Activated B cell treated with CpG ODN at 0.5 μM for 24 hours (primary cell): ENCODE measurements at regions of chr13 and their contacts with region 1.

Region 1: GRCh38 chr13:74026753-74027152 is 107.5 kb downstream of the KLF12 start:
- DNase-seq: peak; percentile 26
- ATAC-seq: peak; percentile 97
- H3K4me3 Mint-ChIP-seq: peak overlapping the region; percentile 81
- H3K27ac Mint-ChIP-seq: peak overlapping the region; percentile 97
- H3K4me1 Mint-ChIP-seq: peaks cover 70% of the 10 kb centered on the region
- H3K27me3 Mint-ChIP-seq: no peaks in the 10 kb centered on the region
- CTCF ChIP-seq: no peak

Region 2: DNA sequence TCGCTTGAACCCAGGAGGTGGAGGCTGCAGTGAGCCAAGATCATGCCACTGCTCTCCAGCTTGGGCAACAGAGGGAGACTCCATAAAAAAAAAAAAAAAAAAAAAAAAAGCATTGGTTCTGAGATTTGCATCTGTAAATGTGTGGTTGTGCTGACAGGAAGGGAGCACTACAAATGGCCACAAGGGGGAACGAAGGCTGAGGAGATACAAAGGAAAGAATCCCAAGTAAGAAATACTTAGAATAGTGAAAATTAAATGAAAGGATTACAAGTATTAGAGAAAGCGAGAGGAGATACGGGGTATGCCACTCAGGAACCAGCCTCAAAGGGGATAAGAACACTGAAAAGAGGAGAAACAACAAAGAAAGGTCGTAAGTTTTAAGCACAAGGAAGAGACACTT is 177.5 kb before region 1 on chr13:
- CTCF ChIA-PET with region 1: no interaction called
- POLR2A ChIA-PET with region 1: no interaction called
- intact Hi-C with region 1: loop called (anchors 5 kb)
- DNase-seq: no peak
- ATAC-seq: peak; percentile 45
- H3K4me3 Mint-ChIP-seq: no peak overlapping the region
- H3K27ac Mint-ChIP-seq: no peak overlapping the region
- H3K4me1 Mint-ChIP-seq: peaks cover 30% of the 10 kb centered on the region
- H3K27me3 Mint-ChIP-seq: no peaks in the 10 kb centered on the region
- CTCF ChIP-seq: no peak

Region 3: GRCh38 chr13:73924607-73925006 is 102.1 kb before region 1 on chr13:
- CTCF ChIA-PET with region 1: no interaction called
- POLR2A ChIA-PET with region 1: no interaction called
- intact Hi-C with region 1: no loop called
- DNase-seq: no peak
- ATAC-seq: no peak
- H3K4me3 Mint-ChIP-seq: no peak overlapping the region
- H3K27ac Mint-ChIP-seq: no peak overlapping the region
- H3K4me1 Mint-ChIP-seq: peaks cover 21% of the 10 kb centered on the region
- H3K27me3 Mint-ChIP-seq: no peaks in the 10 kb centered on the region
- CTCF ChIP-seq: no peak

Region 4: GRCh38 chr13:73967397-73968165 is 59.2 kb before region 1 on chr13:
- CTCF ChIA-PET with region 1: no interaction called
- POLR2A ChIA-PET with region 1: interaction called, 9 read pairs
- intact Hi-C with region 1: loop called (anchors 5 kb)
- DNase-seq: no peak
- ATAC-seq: peak; percentile 93
- H3K4me3 Mint-ChIP-seq: peak overlapping the region; percentile 57
- H3K27ac Mint-ChIP-seq: peak overlapping the region; percentile 82
- H3K4me1 Mint-ChIP-seq: peaks cover 61% of the 10 kb centered on the region
- H3K27me3 Mint-ChIP-seq: no peaks in the 10 kb centered on the region
- CTCF ChIP-seq: no peak

Region 5: GRCh38 chr13:73991884-73992283 is 34.9 kb before region 1 on chr13:
- CTCF ChIA-PET with region 1: no interaction called
- POLR2A ChIA-PET with region 1: interaction called, 4 read pairs
- intact Hi-C with region 1: loop called (anchors 5 kb)
- DNase-seq: no peak
- ATAC-seq: no peak
- H3K4me3 Mint-ChIP-seq: no peak overlapping the region
- H3K27ac Mint-ChIP-seq: peak overlapping the region; percentile 26
- H3K4me1 Mint-ChIP-seq: peaks cover 63% of the 10 kb centered on the region
- H3K27me3 Mint-ChIP-seq: no peaks in the 10 kb centered on the region
- CTCF ChIP-seq: no peak

Region 6: DNA sequence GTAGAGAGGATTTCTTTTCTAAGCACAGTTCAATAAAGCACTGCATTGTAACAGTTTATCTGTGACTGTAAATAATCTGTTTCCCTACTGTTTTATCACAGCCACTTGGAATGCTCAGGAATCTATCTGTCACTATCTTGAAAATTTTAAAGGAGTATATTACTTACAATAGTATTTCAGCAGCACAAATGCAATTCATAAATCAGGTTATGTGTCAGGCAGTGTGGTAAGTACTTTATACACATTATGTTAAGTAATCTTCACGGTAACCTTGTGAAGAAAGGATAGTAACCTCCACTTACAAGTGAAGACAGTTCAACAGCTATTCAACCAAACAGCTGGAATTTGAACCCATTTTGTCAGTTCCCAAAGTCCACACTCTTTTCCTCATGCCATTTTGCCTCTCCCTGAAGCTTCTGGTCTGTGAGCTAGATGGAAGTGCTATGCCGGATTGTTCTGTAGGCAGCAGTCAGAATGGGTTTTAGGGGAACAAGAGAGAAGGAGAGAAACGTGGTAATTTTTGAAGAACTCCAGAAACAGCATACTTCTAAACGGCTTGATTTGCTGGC is 17.6 kb before region 1 on chr13:
- CTCF ChIA-PET with region 1: no interaction called
- POLR2A ChIA-PET with region 1: no interaction called
- intact Hi-C with region 1: loop called (anchors 2 kb)
- DNase-seq: no peak
- ATAC-seq: no peak
- H3K4me3 Mint-ChIP-seq: no peak overlapping the region
- H3K27ac Mint-ChIP-seq: no peak overlapping the region
- H3K4me1 Mint-ChIP-seq: peaks cover 33% of the 10 kb centered on the region
- H3K27me3 Mint-ChIP-seq: no peaks in the 10 kb centered on the region
- CTCF ChIP-seq: no peak

Region 7: DNA sequence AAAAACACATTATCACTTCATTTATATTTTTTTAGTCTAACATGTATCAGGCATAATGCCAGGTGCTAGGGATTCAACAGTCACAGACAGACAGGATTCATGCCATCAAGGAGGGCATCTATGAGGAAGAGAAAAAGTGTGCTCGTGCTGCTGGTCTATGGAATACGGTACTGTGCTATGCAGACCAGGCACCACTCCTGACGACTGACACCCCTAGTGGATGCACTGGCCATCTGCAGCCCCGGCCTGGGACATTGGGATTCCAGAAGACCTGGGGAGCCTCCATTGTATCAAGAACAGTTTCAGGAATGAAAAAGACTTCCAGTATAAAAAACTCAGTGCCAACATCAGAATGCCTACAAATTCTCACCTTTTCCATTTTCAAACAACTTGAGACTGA is 13.4 kb after region 1 on chr13:
- CTCF ChIA-PET with region 1: interaction called, 3 read pairs
- POLR2A ChIA-PET with region 1: interaction called, 5 read pairs
- intact Hi-C with region 1: loop called (anchors 1 kb)
- DNase-seq: no peak
- ATAC-seq: peak; percentile 80
- H3K4me3 Mint-ChIP-seq: no peak overlapping the region
- H3K27ac Mint-ChIP-seq: no peak overlapping the region
- H3K4me1 Mint-ChIP-seq: peaks cover 55% of the 10 kb centered on the region
- H3K27me3 Mint-ChIP-seq: no peaks in the 10 kb centered on the region
- CTCF ChIP-seq: no peak

Region 8: GRCh38 chr13:74062933-74063332 is 36.2 kb after region 1 on chr13:
- CTCF ChIA-PET with region 1: no interaction called
- POLR2A ChIA-PET with region 1: interaction called, 5 read pairs
- intact Hi-C with region 1: loop called (anchors 1 kb)
- DNase-seq: no peak
- ATAC-seq: peak; percentile 69
- H3K4me3 Mint-ChIP-seq: peak overlapping the region; percentile 77
- H3K27ac Mint-ChIP-seq: peak overlapping the region; percentile 88
- H3K4me1 Mint-ChIP-seq: peaks cover 86% of the 10 kb centered on the region
- H3K27me3 Mint-ChIP-seq: no peaks in the 10 kb centered on the region
- CTCF ChIP-seq: no peak